ENCODE measurements at regions of chr5 and their contacts with region 1.

Region 1: GRCh38 chr5:173498286-173498685 is 118.2 kb downstream of the BOD1 start:
- DNase-seq: peak; percentile 69 to 74
- ATAC-seq: peak; percentile 61 to 70
- H3K4me3 ChIP-seq: peak overlapping the region in 2 of 4 donors; percentile 22 to 27
- H3K27ac ChIP-seq: peak overlapping the region; percentile 76 to 93 (median 84)
- H3K4me1 ChIP-seq: peaks cover 61 to 68% of the 10 kb centered on the region in 2 donors
- H3K27me3 ChIP-seq: no peaks in the 10 kb centered on the region
- CTCF ChIP-seq: no peak
- POLR2A ChIP-seq: peak in 1 of 2 donors; percentile 3

Region 2: GRCh38 chr5:172958331-172959046 is 539.8 kb before region 1 on chr5:
- in situ Hi-C with region 1: no loop called
- intact Hi-C with region 1: no loop called
- DNase-seq: peak; percentile 37 to 41
- ATAC-seq: peak; percentile 77 to 78
- H3K4me3 ChIP-seq: peak overlapping the region; percentile 65 to 98 (median 96)
- H3K27ac ChIP-seq: peak overlapping the region; percentile 68 to 92 (median 86)
- H3K4me1 ChIP-seq: peaks cover 10 to 22% of the 10 kb centered on the region in 2 donors
- H3K27me3 ChIP-seq: no peaks in the 10 kb centered on the region
- CTCF ChIP-seq: no peak
- POLR2A ChIP-seq: no peak

Region 3: DNA sequence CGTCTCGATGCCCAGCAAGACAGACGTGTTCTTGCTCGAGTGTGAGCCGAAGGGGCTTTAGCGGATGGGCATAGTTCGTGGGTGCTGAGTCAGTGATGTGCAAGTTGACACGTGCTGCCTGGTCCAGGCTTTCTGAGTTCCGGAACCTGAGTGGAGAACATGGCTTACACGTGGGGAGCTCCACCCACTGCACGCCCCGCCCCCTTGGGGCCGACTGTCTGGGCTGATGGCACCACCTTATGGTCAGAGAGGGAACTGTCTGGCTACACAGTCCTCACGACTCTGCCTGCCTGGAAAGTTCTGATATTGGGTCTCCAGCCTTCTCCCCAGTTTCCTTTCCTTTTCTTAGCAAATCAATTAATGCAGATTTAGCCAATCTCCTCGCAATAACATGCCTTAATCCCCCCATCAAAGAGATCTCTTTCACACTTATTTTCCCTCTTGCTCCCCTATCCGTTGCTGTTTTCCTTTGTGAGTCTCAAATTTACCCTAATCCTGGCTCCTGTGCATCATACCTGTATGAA is 166.3 kb before region 1 on chr5:
- in situ Hi-C with region 1: no loop called
- intact Hi-C with region 1: loop called (anchors 2 kb)
- DNase-seq: peak; percentile 49 to 82
- ATAC-seq: peak; percentile 47
- H3K4me3 ChIP-seq: no peak overlapping the region
- H3K27ac ChIP-seq: no peak overlapping the region
- H3K4me1 ChIP-seq: peaks cover 8 to 27% of the 10 kb centered on the region in 2 donors
- H3K27me3 ChIP-seq: no peaks in the 10 kb centered on the region
- CTCF ChIP-seq: peak; percentile 84 to 93 (median 90)
- POLR2A ChIP-seq: no peak

Region 4: DNA sequence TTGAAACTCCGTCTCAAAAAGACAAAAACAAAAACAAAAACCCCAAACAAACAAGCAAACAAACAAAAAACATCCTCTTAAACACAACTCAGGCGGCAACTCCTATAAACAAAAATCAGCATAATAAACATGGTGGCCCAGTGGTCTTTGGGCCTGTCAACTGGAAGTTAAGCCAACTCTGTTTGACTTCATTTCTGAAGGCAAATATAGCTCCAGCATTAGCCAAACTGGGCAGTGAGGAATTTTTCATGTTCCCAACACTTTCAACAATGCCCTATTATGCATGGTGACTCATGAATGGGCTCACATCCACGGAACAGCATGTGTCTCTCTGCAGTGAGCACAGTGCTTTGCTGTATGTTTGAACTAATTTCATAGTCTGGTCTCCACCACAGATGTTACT is 26.1 kb before region 1 on chr5:
- in situ Hi-C with region 1: no loop called
- intact Hi-C with region 1: loop called (anchors 2 kb)
- DNase-seq: peak; percentile 81
- ATAC-seq: peak; percentile 75 to 84
- H3K4me3 ChIP-seq: no peak overlapping the region
- H3K27ac ChIP-seq: peak overlapping the region; percentile 77 to 92 (median 82)
- H3K4me1 ChIP-seq: peaks cover 36 to 45% of the 10 kb centered on the region in 2 donors
- H3K27me3 ChIP-seq: no peaks in the 10 kb centered on the region
- CTCF ChIP-seq: no peak
- POLR2A ChIP-seq: peak in 1 of 2 donors; percentile 22

Region 5: GRCh38 chr5:173530547-173530946 is 32.3 kb after region 1 on chr5:
- in situ Hi-C with region 1: no loop called
- intact Hi-C with region 1: loop called (anchors 1 kb)
- DNase-seq: no peak
- ATAC-seq: no peak
- H3K4me3 ChIP-seq: no peak overlapping the region
- H3K27ac ChIP-seq: no peak overlapping the region
- H3K4me1 ChIP-seq: peaks cover 0 to 6% of the 10 kb centered on the region in 2 donors
- H3K27me3 ChIP-seq: no peaks in the 10 kb centered on the region
- CTCF ChIP-seq: no peak
- POLR2A ChIP-seq: no peak

Region 6: GRCh38 chr5:173536312-173536641 is 38.0 kb after region 1 on chr5:
- in situ Hi-C with region 1: no loop called
- intact Hi-C with region 1: loop called (anchors 5 kb)
- DNase-seq: no peak
- ATAC-seq: no peak
- H3K4me3 ChIP-seq: no peak overlapping the region
- H3K27ac ChIP-seq: peak overlapping the region in 2 of 4 donors; percentile 28 to 75
- H3K4me1 ChIP-seq: peaks cover 6 to 10% of the 10 kb centered on the region in 2 donors
- H3K27me3 ChIP-seq: no peaks in the 10 kb centered on the region
- CTCF ChIP-seq: no peak
- POLR2A ChIP-seq: no peak